BJ (cell line): ENCODE measurements at regions of chr9 and their contacts with region 1.

Region 1: GRCh38 chr9:93003552-93004407 is 54.7 kb upstream of the SUSD3 start:
- DNase-seq: no peak
- H3K4me3 ChIP-seq: no peak overlapping the region
- H3K27me3 ChIP-seq: no peaks in the 10 kb centered on the region; the same call in 1 of the 2 replicates
- CTCF ChIP-seq: peak; percentile 71

Region 2: GRCh38 chr9:92970467-92970923 is 33.3 kb before region 1 on chr9:
- CTCF ChIA-PET with region 1: no interaction called
- POLR2A ChIA-PET with region 1: no interaction called
- DNase-seq: no peak
- H3K4me3 ChIP-seq: no peak overlapping the region
- H3K27me3 ChIP-seq: no peaks in the 10 kb centered on the region
- CTCF ChIP-seq: no peak

Region 3: DNA sequence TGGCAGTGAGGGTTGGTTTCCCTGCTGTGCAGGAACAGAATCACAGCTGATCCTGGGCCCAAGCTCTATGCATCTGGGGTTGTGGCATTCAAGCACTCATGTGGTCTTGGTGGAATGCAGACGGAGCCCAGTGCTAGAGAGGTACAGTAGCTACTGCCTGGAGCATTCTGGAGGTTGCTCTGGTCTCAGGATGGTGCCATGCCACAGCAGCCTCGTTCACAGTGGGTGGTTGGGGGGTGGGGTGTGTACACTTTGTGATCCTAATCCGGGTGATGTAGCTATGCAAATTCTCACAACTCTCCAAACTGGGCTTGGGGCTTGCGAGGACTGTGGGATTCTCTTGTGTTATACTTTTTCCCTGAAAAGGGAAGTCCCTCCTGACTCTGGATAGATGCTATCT is 11.2 kb before region 1 on chr9:
- CTCF ChIA-PET with region 1: interaction called, 10 read pairs
- POLR2A ChIA-PET with region 1: no interaction called
- DNase-seq: no peak
- H3K4me3 ChIP-seq: no peak overlapping the region
- H3K27me3 ChIP-seq: no peaks in the 10 kb centered on the region
- CTCF ChIP-seq: no peak

Region 4: DNA sequence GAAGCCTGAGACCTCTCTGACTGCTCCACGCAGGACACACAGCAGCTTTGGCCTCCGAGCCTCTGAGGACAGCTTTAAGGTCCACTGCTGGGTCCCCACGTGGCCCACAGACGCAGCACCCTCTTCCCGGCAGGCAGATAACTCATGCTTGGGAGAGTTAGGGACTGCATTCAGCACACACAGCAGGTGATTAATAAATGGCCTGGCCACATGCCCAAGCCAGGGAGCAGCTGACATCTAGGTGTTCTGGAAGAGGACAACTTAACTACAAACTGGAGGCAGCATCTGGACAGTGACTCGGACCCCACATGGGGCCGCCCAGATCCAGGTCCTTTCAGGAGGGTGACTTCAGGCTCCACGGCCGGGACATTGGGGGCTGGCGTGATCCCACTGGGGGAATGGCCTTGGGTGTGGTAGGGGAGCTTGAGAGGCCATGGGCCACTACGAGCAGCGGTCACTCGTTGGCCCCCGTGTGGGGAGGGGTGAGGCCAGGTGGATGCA is 119.0 kb after region 1 on chr9:
- CTCF ChIA-PET with region 1: no interaction called
- POLR2A ChIA-PET with region 1: no interaction called
- DNase-seq: no peak
- H3K4me3 ChIP-seq: no peak overlapping the region
- H3K27me3 ChIP-seq: no peaks in the 10 kb centered on the region
- CTCF ChIP-seq: no peak

Region 5: DNA sequence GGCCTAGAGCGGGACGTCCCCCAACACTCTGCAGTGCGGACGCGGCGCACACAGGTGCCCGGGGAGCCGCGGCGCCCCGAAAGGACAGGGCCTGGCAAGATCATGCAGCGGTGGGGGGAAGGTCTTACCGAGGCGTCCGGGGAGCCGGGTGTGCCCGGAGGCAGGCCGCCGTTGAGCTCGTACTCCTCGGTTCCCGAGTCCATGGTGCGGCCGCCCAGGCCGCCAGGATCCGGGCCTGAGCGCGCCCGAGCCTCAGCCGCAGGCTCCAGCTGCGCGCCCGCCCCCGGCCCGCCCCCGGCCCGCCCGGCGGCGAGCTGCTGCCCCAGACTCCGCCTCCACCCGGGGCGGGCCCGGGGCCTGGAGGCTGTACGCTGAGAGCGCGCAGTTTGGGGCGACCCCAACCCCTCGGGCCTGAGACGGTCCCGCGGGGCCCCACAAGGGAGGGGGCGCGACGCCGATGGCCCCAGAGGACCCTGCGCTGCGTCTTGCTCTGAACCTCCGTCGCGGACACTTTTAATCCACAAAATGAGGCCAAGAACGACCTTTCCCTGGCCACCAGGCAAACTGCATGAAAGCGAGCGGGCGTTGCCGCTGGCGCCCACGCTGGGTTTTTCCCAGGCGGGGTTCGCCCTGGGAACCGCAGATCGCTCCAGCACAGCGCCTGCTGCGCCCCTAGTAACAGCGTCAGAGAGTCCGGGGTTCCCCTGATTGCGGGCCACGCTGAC is 130.4 kb after region 1 on chr9 and contains the start of gene NINJ1:
- CTCF ChIA-PET with region 1: no interaction called
- POLR2A ChIA-PET with region 1: no interaction called
- DNase-seq: no peak
- H3K4me3 ChIP-seq: peak within 1 kb of the TSS; percentile 84
- H3K27me3 ChIP-seq: peaks cover 1% of the 10 kb centered on the region; the same call in 1 of the 2 replicates
- CTCF ChIP-seq: no peak
- polyA plus RNA-seq, gene NINJ1: 32.3 and 53.9 TPM in 2 replicates

Region 6: DNA sequence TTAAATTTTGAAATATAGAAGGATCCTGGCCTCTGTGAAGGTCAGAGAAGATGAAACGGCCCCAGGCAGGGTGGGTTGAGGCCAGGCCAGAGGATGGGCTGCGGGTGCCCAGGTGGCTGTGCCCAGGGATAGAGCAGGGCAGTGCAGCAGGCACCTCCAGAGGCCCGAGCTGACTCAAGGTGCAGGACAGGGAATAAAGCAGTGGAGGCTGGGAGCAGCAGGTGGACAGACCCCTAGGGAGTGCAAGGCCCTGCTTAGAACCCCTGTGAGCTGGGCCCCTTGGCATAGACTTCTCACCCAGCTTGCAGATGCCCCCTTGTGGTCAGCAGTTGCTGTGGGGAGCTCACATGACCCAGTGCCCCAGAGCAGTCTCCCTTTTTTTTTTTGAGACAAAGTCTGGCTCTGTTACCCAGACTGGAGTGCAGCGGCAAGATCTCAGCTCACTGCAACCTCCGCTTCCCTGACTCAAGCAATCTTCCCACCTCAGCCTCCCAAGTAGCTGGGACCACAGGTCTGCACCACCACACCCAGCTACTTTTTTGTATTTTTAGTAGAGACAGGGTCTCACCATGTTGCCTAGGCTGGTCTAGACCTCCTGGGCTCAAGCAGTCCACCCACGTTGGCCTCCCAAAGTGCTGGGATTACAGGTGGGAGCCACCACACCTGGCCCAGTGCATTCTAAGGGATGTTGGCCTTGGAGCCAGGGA is 298.9 kb after region 1 on chr9:
- CTCF ChIA-PET with region 1: interaction called, 11 read pairs
- POLR2A ChIA-PET with region 1: no interaction called
- DNase-seq: no peak
- H3K4me3 ChIP-seq: no peak overlapping the region
- H3K27me3 ChIP-seq: no peaks in the 10 kb centered on the region; the same call in 1 of the 2 replicates
- CTCF ChIP-seq: peak; percentile 67